B cell (primary cell): ENCODE measurements at regions of chr9 and their contacts with region 1.

Region 1: DNA sequence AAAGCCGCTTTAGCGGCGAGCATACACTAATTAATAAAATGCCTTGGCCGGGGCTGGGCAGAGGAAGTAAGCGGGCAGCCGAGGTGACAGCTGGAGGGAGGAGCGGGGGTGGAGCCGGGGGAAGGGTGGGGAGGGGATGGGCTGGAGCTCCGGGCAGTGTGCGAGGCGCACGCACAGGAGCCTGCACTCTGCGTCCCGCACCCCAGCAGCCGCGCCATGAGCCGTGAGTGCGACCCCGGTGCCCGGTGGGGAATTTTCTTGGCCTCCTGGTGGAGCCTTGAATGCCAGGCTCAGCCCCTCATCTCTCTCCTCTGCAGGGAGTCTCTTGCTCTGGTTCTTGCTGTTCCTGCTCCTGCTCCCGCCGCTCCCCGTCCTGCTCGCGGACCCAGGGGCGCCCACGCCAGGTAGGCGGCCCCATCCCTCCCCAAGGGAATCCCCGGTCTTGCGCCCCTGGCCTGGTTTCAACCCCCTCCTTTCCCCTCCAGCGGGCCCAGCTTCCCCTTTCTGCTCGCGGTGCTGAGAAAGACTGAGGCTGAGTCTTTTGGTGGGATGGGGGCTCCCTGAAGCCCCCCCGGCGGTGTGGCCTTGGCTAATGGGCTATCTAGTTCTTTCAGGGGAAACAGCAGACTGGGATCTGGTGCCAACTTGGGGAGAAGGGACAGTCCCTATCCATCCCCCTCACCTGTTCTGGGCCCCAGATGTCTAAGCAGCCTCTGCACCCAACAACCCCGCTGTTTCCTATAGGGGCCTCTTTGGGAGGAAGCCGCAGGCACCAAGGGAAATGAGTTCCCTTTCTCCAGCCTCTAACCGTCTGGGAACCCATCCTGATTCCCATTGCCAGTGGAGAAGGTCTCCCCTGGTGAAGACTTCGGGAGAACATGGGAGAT is at the start of gene PTGS1:
- DNase-seq: peak; percentile 72
- ATAC-seq: peak; percentile 77
- H3K4me3 ChIP-seq: peak within 1 kb of the TSS; percentile 59 to 87 (median 63)
- H3K4me3 Mint-ChIP-seq: peak within 1 kb of the TSS; percentile 91
- H3K27ac ChIP-seq: peak within 1 kb of the TSS; percentile 67 to 76
- H3K27ac Mint-ChIP-seq: peak within 1 kb of the TSS; percentile 82
- H3K4me1 ChIP-seq: peaks cover 25 to 38% of the 10 kb centered on the region in 2 donors
- H3K4me1 Mint-ChIP-seq: peaks cover 46% of the 10 kb centered on the region
- H3K27me3 ChIP-seq: no peaks in the 10 kb centered on the region
- H3K27me3 Mint-ChIP-seq: no peaks in the 10 kb centered on the region
- CTCF ChIP-seq: no peak
- total RNA-seq, gene PTGS1: 9.5 and 10.4 TPM in 2 replicates

Region 2: GRCh38 chr9:122228568-122229484 is 142.3 kb before region 1 on chr9 and contains the start of gene LHX6:
- CTCF ChIA-PET with region 1: no interaction called
- POLR2A ChIA-PET with region 1: no interaction called
- intact Hi-C with region 1: no loop called
- DNase-seq: peak; percentile 38
- ATAC-seq: peak; percentile 21
- H3K4me3 ChIP-seq: peak within 1 kb of the TSS in 3 of 5 experiments; percentile 20 to 62 (median 34)
- H3K4me3 Mint-ChIP-seq: peak within 1 kb of the TSS; percentile 79
- H3K27ac ChIP-seq: no peak within 1 kb of the TSS
- H3K27ac Mint-ChIP-seq: no peak within 1 kb of the TSS
- H3K4me1 ChIP-seq: peaks cover 5 to 12% of the 10 kb centered on the region in 2 donors
- H3K4me1 Mint-ChIP-seq: peaks cover 4% of the 10 kb centered on the region
- H3K27me3 ChIP-seq: peaks cover 0 to 36% (median 24%) of the 10 kb centered on the region in 4 experiments
- H3K27me3 Mint-ChIP-seq: peaks cover 31% of the 10 kb centered on the region
- CTCF ChIP-seq: no peak
- total RNA-seq, gene LHX6: not detected in 2 replicates

Region 3: DNA sequence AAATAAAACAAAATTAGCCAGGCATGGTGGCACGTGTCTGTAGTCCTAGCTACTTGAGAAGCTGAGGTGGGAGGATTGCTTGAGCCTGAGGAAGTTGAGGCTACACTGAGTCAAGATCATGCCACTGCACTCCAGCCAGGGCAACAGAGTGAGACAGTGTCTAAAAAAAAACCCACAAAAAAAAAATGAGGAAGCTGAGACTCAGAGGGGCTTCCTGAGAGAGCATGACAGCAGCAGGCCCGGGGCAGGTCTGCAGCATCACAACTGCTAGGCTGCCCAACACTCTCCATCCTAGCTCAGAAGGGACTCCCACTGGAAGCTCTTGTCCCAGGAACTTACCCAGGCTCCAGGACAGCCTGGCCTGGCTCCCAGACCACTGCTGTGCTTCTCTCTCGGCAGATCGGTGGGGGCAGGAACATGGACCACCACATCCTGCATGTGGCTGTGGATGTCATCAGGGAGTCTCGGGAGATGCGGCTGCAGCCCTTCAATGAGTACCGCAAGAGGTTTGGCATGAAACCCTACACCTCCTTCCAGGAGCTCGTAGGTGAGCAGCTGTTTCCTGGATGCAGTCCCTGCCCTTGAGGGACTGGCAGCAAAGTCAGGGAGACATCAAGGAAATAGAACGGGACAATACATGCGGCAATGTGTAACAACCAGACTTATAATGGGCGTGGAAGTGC is 18.8 kb after region 1 on chr9:
- CTCF ChIA-PET with region 1: interaction called, 8 read pairs
- POLR2A ChIA-PET with region 1: interaction called, 3 read pairs
- intact Hi-C with region 1: loop called (anchors 1 kb)
- DNase-seq: peak; percentile 82
- ATAC-seq: peak; percentile 97
- H3K4me3 ChIP-seq: peak overlapping the region in 2 of 5 experiments; percentile 27 to 49
- H3K4me3 Mint-ChIP-seq: peak overlapping the region; percentile 60
- H3K27ac ChIP-seq: peak overlapping the region; percentile 54 to 69
- H3K27ac Mint-ChIP-seq: peak overlapping the region; percentile 86
- H3K4me1 ChIP-seq: peaks cover 33 to 37% of the 10 kb centered on the region in 2 donors
- H3K4me1 Mint-ChIP-seq: peaks cover 39% of the 10 kb centered on the region
- H3K27me3 ChIP-seq: no peaks in the 10 kb centered on the region
- H3K27me3 Mint-ChIP-seq: no peaks in the 10 kb centered on the region
- CTCF ChIP-seq: no peak

Region 4: GRCh38 chr9:122464633-122465567 is 93.8 kb after region 1 on chr9:
- CTCF ChIA-PET with region 1: no interaction called
- POLR2A ChIA-PET with region 1: no interaction called
- intact Hi-C with region 1: no loop called
- DNase-seq: peak; percentile 83
- ATAC-seq: peak; percentile 80
- H3K4me3 ChIP-seq: peak overlapping the region; percentile 38 to 81 (median 59)
- H3K4me3 Mint-ChIP-seq: peak overlapping the region; percentile 93
- H3K27ac ChIP-seq: peak overlapping the region; percentile 35 to 57
- H3K27ac Mint-ChIP-seq: peak overlapping the region; percentile 86
- H3K4me1 ChIP-seq: peaks cover 6 to 13% of the 10 kb centered on the region in 2 donors
- H3K4me1 Mint-ChIP-seq: peaks cover 13% of the 10 kb centered on the region
- H3K27me3 ChIP-seq: peaks cover 0 to 10% (median 8%) of the 10 kb centered on the region in 4 experiments
- H3K27me3 Mint-ChIP-seq: peaks cover 47% of the 10 kb centered on the region
- CTCF ChIP-seq: peak; percentile 89